PC-9 (cell line): ENCODE measurements at regions of chr11 and their contacts with region 1.

Region 1: DNA sequence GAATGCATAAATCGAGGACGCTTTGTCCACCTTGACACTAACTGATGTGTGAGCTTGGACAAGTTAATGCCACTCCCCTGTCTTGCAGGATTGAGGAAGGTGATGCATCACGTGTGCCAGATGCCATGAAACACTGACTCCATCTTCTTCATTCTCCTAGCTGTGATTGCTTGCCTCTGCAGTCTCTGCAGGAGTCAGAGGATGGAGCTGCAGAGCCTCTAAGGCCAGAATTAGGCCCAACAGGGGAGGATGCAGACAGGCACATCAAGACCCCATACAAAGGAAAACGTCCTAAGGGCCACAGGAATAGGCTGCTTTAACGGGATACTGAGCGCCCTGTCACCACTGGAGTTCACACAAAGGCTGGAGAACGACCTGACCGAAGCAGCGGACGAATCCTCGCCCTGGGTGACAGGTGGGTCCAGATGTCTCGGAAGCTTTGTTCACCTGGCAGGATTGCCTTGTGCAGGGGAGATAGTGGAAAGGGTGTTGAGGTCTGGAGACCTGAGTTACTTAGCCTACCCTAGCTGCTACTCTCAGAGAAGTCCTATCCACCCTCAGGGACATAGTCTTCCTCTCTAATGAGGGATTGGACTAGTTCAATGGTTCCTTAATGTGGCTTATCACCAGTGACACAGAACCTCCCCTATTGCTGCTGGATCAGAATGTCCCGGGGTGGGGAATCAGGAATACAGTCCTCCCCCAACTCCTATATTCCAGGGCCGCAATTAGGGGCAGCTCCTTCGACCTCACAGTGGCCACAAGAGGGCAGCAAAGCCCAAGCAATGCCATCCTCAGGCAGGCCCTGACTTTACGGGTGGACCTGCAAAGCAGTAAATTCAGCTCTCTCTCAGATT is 32.4 kb downstream of the DBX1 start:
- DNase-seq: peak; percentile 51 to 72
- H3K4me3 ChIP-seq: no peak overlapping the region
- H3K27ac ChIP-seq: no peak overlapping the region
- H3K4me1 ChIP-seq: no peaks in the 10 kb centered on the region
- H3K27me3 ChIP-seq: no peaks in the 10 kb centered on the region
- CTCF ChIP-seq: peak; percentile 93

Region 2: DNA sequence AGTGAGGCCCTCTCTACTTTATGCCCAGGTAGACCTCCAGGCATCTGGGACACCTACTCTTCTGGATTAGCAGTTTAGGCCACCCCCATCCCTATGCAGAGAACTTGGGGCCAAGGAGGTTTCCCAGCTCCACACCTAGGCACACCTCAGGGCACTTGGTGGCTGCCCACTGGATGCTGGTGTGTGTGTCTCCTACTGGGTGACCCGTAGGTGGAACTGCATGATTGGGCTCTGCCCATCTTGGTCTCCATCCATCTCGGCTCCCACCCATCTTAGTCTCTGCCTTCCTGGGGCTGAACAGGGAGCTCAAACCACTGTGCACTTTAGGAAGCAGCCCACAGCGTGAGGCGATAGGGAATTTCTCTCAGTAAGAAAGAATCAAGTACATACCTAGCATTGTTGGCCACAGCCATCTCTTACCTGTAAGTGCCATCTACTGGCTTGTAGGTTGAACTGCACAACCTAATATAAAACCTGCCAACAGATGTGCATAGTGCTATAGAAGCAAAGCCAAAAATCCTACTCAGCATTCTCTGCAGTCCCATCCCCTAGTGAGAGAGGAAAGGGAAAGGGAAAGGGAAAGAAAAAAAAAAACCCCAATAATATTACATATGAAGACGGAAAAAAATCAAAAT is 1274.7 kb before region 1 on chr11:
- CTCF ChIA-PET with region 1: no interaction called
- POLR2A ChIA-PET with region 1: no interaction called
- intact Hi-C with region 1: no loop called
- DNase-seq: peak in 1 of 2 experiments; percentile 62
- H3K4me3 ChIP-seq: no peak overlapping the region
- H3K27ac ChIP-seq: no peak overlapping the region
- H3K4me1 ChIP-seq: no peaks in the 10 kb centered on the region
- H3K27me3 ChIP-seq: peaks cover 32% of the 10 kb centered on the region
- CTCF ChIP-seq: peak; percentile 88

Region 3: DNA sequence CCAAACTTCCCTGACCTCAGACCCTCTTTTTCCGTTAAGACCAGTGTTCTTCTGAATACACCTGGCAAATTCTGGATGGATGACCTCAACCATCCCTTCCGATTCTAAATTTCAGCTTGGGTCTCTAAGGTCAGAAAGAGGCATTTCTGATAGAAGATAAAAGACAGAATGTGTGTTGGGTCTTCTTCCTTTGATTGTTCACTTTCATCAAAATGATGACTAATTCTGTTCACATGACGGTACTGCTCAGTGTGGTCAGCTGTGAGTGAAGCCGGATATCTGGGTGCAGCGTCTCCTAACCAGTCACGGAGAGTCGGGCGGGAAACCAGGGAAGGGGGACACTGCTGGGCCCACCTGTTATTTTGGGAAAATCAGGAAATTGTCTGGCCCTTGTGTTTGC is 566.9 kb before region 1 on chr11:
- CTCF ChIA-PET with region 1: no interaction called
- POLR2A ChIA-PET with region 1: no interaction called
- intact Hi-C with region 1: loop called (anchors 1 kb)
- DNase-seq: peak in 1 of 2 experiments; percentile 12
- H3K4me3 ChIP-seq: no peak overlapping the region
- H3K27ac ChIP-seq: no peak overlapping the region
- H3K4me1 ChIP-seq: no peaks in the 10 kb centered on the region
- H3K27me3 ChIP-seq: no peaks in the 10 kb centered on the region
- CTCF ChIP-seq: no peak

Region 4: GRCh38 chr11:19903620-19904069 is 224.3 kb before region 1 on chr11:
- CTCF ChIA-PET with region 1: interaction called, 7 read pairs
- POLR2A ChIA-PET with region 1: interaction called, 4 read pairs
- intact Hi-C with region 1: loop called (anchors 1 kb)
- DNase-seq: peak in 1 of 2 experiments; percentile 72
- H3K4me3 ChIP-seq: no peak overlapping the region
- H3K27ac ChIP-seq: no peak overlapping the region
- H3K4me1 ChIP-seq: no peaks in the 10 kb centered on the region
- H3K27me3 ChIP-seq: no peaks in the 10 kb centered on the region
- CTCF ChIP-seq: peak; percentile 91

Region 5: DNA sequence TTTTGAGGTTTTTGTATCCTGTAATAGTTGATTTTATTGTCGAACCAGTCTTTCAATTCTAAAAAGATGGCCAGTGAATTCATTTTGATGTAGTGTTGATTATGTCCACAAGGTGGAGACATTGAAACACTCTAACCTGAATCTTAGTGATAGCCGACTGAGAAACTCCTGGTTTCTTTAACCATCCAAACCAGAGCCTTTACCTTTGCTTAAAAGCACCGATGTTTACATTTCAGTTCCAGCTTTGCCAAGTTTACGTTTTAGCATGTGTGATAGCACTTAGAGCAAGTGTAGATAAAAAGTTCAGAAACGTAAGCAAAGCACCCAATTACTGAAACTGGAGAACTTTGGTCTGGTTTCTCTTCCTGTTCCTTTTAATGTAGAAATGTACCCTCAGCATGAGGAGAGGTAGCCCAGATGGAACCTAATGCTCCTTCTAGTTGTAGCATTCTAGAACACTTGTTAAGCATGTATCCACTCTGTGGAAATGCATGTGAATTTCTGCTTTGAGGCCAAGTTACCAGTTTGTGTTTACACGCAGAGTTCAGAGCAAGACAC is 176.3 kb before region 1 on chr11:
- CTCF ChIA-PET with region 1: interaction called, 3 read pairs
- POLR2A ChIA-PET with region 1: interaction called, 3 read pairs
- intact Hi-C with region 1: loop called (anchors 1 kb)
- DNase-seq: peak in 1 of 2 experiments; percentile 47
- H3K4me3 ChIP-seq: no peak overlapping the region
- H3K27ac ChIP-seq: no peak overlapping the region
- H3K4me1 ChIP-seq: peaks cover 3% of the 10 kb centered on the region; the same call in 1 of the 2 replicates
- H3K27me3 ChIP-seq: no peaks in the 10 kb centered on the region
- CTCF ChIP-seq: peak; percentile 85

Region 6: DNA sequence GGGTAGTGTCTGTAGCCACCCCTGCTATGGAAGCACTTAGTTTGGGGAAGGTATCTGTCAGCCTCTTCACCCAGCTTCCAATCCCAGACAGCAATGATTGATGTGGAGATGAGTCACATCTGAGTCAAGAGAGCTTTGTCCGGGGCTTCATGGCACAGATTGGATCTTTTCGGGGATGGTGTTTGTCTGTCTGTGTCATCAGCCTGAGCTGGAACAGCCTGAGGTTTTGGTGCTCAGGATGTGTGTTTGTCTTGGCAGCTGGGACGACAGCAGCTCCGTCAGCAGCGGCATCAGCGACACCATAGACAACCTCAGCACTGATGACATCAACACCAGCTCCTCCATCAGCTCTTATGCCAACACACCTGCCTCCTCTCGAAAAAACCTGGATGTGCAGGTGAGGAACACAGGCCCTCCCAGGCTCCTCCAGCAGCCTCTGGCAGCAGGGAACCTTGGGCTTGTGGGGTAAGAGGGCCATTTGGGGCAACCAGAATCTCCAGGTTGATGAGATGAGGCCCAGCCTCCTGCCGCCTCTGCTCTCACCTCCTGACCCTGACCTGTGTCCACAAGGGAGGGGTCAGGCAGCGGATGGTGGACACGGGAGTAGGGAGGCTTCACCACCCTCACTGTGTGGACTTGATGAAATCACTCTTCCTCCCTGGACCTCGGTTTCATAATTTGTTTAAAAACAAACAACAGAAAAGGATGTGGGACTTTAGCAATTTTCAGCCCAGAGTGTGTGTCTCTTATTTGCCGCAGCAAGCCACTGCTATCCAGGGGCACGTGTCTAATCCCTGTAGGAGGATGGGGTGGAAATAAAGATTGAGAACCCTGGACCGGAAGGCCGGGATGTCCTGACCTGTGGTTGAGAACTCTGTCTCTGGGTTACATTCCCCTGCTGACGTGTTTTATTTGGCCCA is 91.9 kb before region 1 on chr11:
- CTCF ChIA-PET with region 1: no interaction called
- POLR2A ChIA-PET with region 1: no interaction called
- intact Hi-C with region 1: no loop called
- DNase-seq: peak; percentile 46 to 87
- H3K4me3 ChIP-seq: no peak overlapping the region
- H3K27ac ChIP-seq: peak overlapping the region; percentile 66
- H3K4me1 ChIP-seq: peaks cover 46% of the 10 kb centered on the region
- H3K27me3 ChIP-seq: no peaks in the 10 kb centered on the region
- CTCF ChIP-seq: no peak

Region 7: DNA sequence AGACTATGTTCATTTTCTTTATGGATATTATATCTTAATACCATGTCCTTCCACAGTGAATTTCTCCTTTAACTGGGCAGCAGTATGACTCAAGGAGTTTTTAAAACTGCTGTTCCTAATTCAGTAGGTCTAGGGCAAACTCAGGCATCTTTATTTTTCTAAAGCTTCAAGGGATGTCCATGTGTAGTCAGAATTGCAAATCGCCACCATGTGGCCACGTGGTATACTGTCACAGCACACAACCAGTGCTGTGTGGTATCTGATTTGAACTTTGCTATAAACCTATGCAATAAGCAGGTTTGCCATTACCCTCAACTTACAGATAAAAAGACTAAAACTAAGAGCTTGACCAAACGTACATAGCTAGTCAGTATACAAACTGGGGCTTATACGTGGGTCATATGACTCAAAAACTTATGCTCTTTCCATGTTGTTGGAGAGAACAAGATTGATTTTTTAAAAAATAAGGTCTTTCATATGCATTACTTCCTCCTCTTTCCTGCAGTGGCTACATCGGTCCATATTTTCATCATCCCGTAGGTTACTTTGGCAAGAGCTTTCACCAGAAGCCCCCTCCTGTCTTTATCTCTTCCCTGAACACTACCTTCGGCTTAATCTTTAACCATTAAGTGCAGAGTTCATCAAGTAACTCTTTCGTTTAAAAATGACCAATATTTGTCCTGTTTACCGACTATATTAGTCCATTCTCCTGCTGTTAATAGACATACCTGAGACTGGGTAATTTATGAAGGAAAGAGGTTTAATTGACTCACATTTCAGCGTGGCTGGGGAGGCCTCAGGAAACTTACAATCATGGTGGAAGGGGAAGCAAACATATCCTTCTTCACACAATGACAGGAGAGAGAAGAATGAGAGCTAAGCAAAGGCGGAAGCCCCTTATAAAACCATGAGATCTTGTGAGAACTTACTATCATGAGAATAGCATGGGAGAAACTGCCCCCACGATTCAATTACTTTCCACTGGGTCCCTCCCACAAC is 227.6 kb after region 1 on chr11:
- CTCF ChIA-PET with region 1: interaction called, 17 read pairs
- POLR2A ChIA-PET with region 1: no interaction called
- intact Hi-C with region 1: loop called (anchors 1 kb)
- DNase-seq: peak in 1 of 2 experiments; percentile 46
- H3K4me3 ChIP-seq: no peak overlapping the region
- H3K27ac ChIP-seq: no peak overlapping the region
- H3K4me1 ChIP-seq: no peaks in the 10 kb centered on the region; the same call in 1 of the 2 replicates
- H3K27me3 ChIP-seq: no peaks in the 10 kb centered on the region
- CTCF ChIP-seq: peak; percentile 74

Region 8: GRCh38 chr11:21511835-21512440 is 1384.0 kb after region 1 on chr11:
- CTCF ChIA-PET with region 1: interaction called, 5 read pairs
- POLR2A ChIA-PET with region 1: no interaction called
- intact Hi-C with region 1: loop called (anchors 10 kb)
- DNase-seq: peak in 1 of 2 experiments; percentile 43
- H3K4me3 ChIP-seq: no peak overlapping the region
- H3K27ac ChIP-seq: no peak overlapping the region
- H3K4me1 ChIP-seq: no peaks in the 10 kb centered on the region
- H3K27me3 ChIP-seq: no peaks in the 10 kb centered on the region
- CTCF ChIP-seq: peak; percentile 68